Natural killer cell (primary cell): ENCODE measurements at regions of chr13 and their contacts with region 1.

Region 1: GRCh38 chr13:23921451-23921888 is 24.2 kb upstream of the C1QTNF9B start:
- DNase-seq: peak in 1 of 2 donors; percentile 58
- ATAC-seq: peak; percentile 47 to 52 (median 50)
- H3K4me3 ChIP-seq: no peak overlapping the region
- H3K4me3 Mint-ChIP-seq: no peak overlapping the region
- H3K27ac ChIP-seq: no peak overlapping the region
- H3K27ac Mint-ChIP-seq: no peak overlapping the region
- H3K4me1 ChIP-seq: no peaks in the 10 kb centered on the region
- H3K4me1 Mint-ChIP-seq: no peaks in the 10 kb centered on the region
- H3K27me3 ChIP-seq: peaks cover 4% of the 10 kb centered on the region
- H3K27me3 Mint-ChIP-seq: peaks cover 17 to 57% of the 10 kb centered on the region in 2 donors
- CTCF ChIP-seq: peak; percentile 79

Region 2: DNA sequence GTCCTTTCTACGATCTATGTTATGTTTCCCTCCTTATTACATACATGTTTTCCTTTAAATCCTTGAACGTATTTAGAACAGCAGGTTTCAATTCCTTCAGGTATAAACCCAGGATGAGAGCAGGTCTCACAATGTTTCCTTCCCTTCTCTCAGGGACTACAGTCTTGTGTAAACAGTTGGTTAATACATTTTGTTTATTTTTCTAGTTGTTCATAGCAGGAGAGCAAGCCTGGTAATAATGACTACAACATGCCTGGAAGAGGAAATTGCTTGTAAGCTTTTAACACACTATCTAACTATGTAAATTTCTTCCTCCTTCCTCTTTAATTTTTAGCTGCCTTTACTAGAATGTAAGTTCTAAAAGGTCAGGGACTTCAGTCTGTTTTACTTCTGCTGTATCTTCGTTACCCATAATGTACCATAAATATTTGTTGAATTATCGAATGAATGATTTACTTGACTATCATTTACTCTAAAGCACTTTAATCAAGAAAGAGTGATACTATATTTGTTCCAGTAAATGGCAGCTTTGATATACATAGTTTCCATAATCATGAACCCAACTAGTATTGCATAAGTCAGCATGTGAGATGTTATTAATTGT is 380.1 kb before region 1 on chr13:
- intact Hi-C with region 1: no loop called
- DNase-seq: no peak
- ATAC-seq: no peak
- H3K4me3 ChIP-seq: no peak overlapping the region
- H3K4me3 Mint-ChIP-seq: no peak overlapping the region
- H3K27ac ChIP-seq: no peak overlapping the region
- H3K27ac Mint-ChIP-seq: no peak overlapping the region
- H3K4me1 ChIP-seq: no peaks in the 10 kb centered on the region
- H3K4me1 Mint-ChIP-seq: no peaks in the 10 kb centered on the region
- H3K27me3 ChIP-seq: no peaks in the 10 kb centered on the region
- H3K27me3 Mint-ChIP-seq: peaks cover 14 to 45% of the 10 kb centered on the region in 2 donors
- CTCF ChIP-seq: no peak

Region 3: GRCh38 chr13:23876265-23876664 is 45.2 kb before region 1 on chr13:
- intact Hi-C with region 1: no loop called
- DNase-seq: no peak
- ATAC-seq: peak in 1 of 3 donors; percentile 46
- H3K4me3 ChIP-seq: no peak overlapping the region
- H3K4me3 Mint-ChIP-seq: no peak overlapping the region
- H3K27ac ChIP-seq: no peak overlapping the region
- H3K27ac Mint-ChIP-seq: no peak overlapping the region
- H3K4me1 ChIP-seq: no peaks in the 10 kb centered on the region
- H3K4me1 Mint-ChIP-seq: no peaks in the 10 kb centered on the region
- H3K27me3 ChIP-seq: no peaks in the 10 kb centered on the region
- H3K27me3 Mint-ChIP-seq: no peaks in the 10 kb centered on the region
- CTCF ChIP-seq: no peak

Region 4: GRCh38 chr13:23966691-23967615 is 45.5 kb after region 1 on chr13:
- intact Hi-C with region 1: loop called (anchors 2 kb)
- DNase-seq: peak in 1 of 2 donors; percentile 66
- ATAC-seq: peak; percentile 58 to 76 (median 75)
- H3K4me3 ChIP-seq: peak overlapping the region; percentile 51
- H3K4me3 Mint-ChIP-seq: peak overlapping the region; percentile 76
- H3K27ac ChIP-seq: peak overlapping the region; percentile 97
- H3K27ac Mint-ChIP-seq: peak overlapping the region; percentile 89 to 90
- H3K4me1 ChIP-seq: peaks cover 12% of the 10 kb centered on the region
- H3K4me1 Mint-ChIP-seq: peaks cover 16 to 21% of the 10 kb centered on the region in 2 donors
- H3K27me3 ChIP-seq: no peaks in the 10 kb centered on the region
- H3K27me3 Mint-ChIP-seq: no peaks in the 10 kb centered on the region
- CTCF ChIP-seq: no peak